ENCODE measurements at regions of chr6 and their contacts with region 1.

Region 1: GRCh38 chr6:26485112-26485780 is 14.9 kb upstream of the BTN1A1 start:
- DNase-seq: no peak
- ATAC-seq: peak; percentile 23; the same call in 1 of the 3 replicates
- H3K4me3 ChIP-seq: no peak overlapping the region
- H3K27ac ChIP-seq: no peak overlapping the region
- H3K4me1 ChIP-seq: peaks cover 0 to 9% of the 10 kb centered on the region in 2 experiments; a peak in 2 of 5 replicates
- H3K27me3 ChIP-seq: no peaks in the 10 kb centered on the region
- CTCF ChIP-seq: no peak
- EP300 ChIP-seq: no peak
- POLR2A ChIP-seq: no peak
- RAD21 ChIP-seq: no peak

Region 2: DNA sequence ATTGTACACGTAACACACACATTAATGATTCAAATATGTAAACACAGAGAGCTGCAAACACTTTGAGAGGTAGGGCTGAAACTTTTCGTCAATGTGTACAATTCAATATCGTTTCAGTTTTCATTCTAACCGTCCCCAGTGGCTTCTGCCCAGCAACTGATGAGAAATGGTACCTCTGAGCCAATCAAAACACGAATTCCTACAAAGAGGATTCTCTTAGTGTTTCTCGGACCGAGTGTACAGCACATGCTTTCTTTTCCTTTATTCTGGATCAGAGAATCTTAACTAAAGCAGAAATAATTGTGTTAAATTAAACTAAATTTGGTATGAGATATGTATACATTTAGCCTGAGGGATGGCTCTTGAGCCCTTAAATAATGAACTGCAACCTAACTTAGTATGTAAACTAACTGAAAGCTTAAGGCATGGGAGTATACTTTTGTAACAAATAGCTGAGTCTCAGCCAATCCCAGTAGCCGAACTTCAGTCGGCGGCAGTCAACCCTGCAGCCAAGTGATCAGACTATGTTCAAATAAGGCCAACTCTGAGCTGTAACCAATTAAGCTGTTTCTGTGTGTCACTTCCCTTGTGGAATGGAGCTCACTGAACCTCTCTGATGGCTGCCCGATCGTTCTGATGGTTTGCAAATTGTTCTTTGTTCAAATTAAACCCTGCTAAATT is 11.3 kb before region 1 on chr6:
- CTCF ChIA-PET with region 1: no interaction called
- POLR2A ChIA-PET with region 1: interaction called, 18 read pairs
- in situ Hi-C with region 1: no loop called
- intact Hi-C with region 1: no loop called
- DNase-seq: peak; percentile 66 to 93 (median 79)
- ATAC-seq: peak; percentile 86
- H3K4me3 ChIP-seq: peak overlapping the region; percentile 26
- H3K27ac ChIP-seq: peak overlapping the region; percentile 75
- H3K4me1 ChIP-seq: peaks cover 32 to 47% of the 10 kb centered on the region in 2 experiments
- H3K27me3 ChIP-seq: no peaks in the 10 kb centered on the region
- CTCF ChIP-seq: no peak
- EP300 ChIP-seq: no peak; the same call in 1 of the 2 replicates
- POLR2A ChIP-seq: peak; percentile 64
- RAD21 ChIP-seq: no peak

Measured in K562 (cell line).